Posterior vena cava (tissue), 2 donors: ENCODE measurements at regions of chr10 and their contacts with region 1.

Region 1: DNA sequence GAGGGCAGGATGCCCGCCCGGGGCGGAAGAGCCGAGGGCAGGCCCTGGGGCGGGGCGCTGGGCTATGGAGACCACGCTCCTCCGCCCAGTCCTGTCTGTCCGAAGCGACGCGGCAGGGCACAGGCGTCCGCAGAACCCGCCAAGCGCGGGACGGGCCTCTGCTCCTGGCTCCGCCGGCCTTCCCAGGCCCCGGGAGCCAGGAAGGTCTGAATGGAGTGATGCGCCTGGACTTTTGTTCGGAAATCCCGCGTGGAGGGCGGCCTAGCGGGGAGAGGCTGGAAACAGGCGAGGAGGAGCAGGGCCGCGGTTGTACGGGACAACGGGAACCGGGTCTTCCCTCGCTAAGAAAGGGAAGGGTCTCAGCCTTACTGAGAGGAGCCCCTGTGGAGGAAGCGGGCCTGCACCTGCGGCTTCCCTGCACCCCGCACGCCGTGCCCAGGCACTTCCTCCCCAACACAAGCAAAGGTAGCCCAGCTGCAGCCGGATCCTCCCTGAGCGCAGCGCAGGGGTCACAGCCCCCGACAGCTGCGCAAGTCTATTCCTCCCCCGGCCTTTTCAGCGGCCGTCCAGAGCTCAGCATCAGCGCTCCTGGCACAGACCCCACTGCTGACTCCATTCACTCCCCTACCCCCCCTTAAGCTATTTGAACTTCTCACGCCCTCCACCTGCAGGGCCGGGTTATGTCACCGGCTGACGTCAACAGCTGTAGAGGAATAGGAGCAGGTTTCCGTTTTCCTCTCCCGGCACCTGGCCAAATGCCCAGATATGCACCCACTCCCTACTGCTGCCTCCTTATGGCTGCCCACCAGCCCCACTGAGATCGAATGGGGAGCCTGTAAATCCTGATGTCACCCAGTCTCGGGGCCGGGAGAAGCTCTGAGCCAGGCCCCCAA is 143.2 kb upstream of the RET start:
- DNase-seq: peak; percentile 77

Region 2: GRCh38 chr10:42960491-42960990 is 26.8 kb after region 1 on chr10:
- intact Hi-C with region 1: loop called in 1 of 2 experiments (anchors 2 kb)
- DNase-seq: peak; percentile 60

Region 3: GRCh38 chr10:43110338-43111086 is 176.8 kb after region 1 on chr10:
- intact Hi-C with region 1: no loop called
- DNase-seq: peak; percentile 68